Gastrocnemius medialis (tissue), 4 donors: ENCODE measurements at regions of chr12 and their contacts with region 1.

Region 1: GRCh38 chr12:117472983-117473382 is 111.6 kb upstream of the NOS1 start:
- DNase-seq: no peak
- ATAC-seq: peak in 1 of 2 donors; percentile 45
- H3K4me3 ChIP-seq: no peak overlapping the region
- H3K27ac ChIP-seq: no peak overlapping the region
- H3K4me1 ChIP-seq: no peaks in the 10 kb centered on the region
- H3K27me3 ChIP-seq: no peaks in the 10 kb centered on the region
- CTCF ChIP-seq: peak in 3 of 5 experiments; percentile 17 to 54 (median 44)
- POLR2A ChIP-seq: no peak

Region 2: GRCh38 chr12:117587631-117588287 is 114.8 kb after region 1 on chr12:
- in situ Hi-C with region 1: no loop called
- intact Hi-C with region 1: loop called (anchors 10 kb)
- DNase-seq: peak; percentile 27 to 65
- ATAC-seq: peak; percentile 83 to 91
- H3K4me3 ChIP-seq: peak overlapping the region in 3 of 4 donors; percentile 27 to 33 (median 30)
- H3K27ac ChIP-seq: no peak overlapping the region
- H3K4me1 ChIP-seq: no peaks in the 10 kb centered on the region
- H3K27me3 ChIP-seq: peaks cover 0 to 5% (median 0%) of the 10 kb centered on the region in 3 donors
- CTCF ChIP-seq: peak; percentile 87 to 92 (median 90)
- POLR2A ChIP-seq: no peak